HepG2 (cell line): ENCODE measurements at regions of chr3 and their contacts with region 1.

Region 1: GRCh38 chr3:13231781-13232666 is 158.8 kb upstream of the IQSEC1 start:
- DNase-seq: no peak
- ATAC-seq: no peak
- H3K4me3 ChIP-seq: no peak overlapping the region
- H3K27ac ChIP-seq: no peak overlapping the region
- H3K4me1 ChIP-seq: peaks cover 12% of the 10 kb centered on the region; the same call in 1 of the 2 replicates
- H3K27me3 ChIP-seq: no peaks in the 10 kb centered on the region
- CTCF ChIP-seq: no peak
- EP300 ChIP-seq: no peak
- POLR2A ChIP-seq: no peak
- RAD21 ChIP-seq: no peak

Region 2: GRCh38 chr3:13262493-13263211 is 30.6 kb after region 1 on chr3:
- CTCF ChIA-PET with region 1: no interaction called
- POLR2A ChIA-PET with region 1: interaction called, 3 read pairs
- in situ Hi-C with region 1: no loop called
- intact Hi-C with region 1: loop called (anchors 1 kb)
- DNase-seq: peak; percentile 99
- ATAC-seq: peak; percentile 72
- H3K4me3 ChIP-seq: no peak overlapping the region
- H3K27ac ChIP-seq: peak overlapping the region; percentile 93
- H3K4me1 ChIP-seq: peaks cover 92% of the 10 kb centered on the region
- H3K27me3 ChIP-seq: no peaks in the 10 kb centered on the region
- CTCF ChIP-seq: peak; percentile 18; the same call in 1 of the 2 replicates
- EP300 ChIP-seq: peak; percentile 36 to 96; a peak in 3 of 4 replicates
- POLR2A ChIP-seq: no peak
- RAD21 ChIP-seq: peak; percentile 36; the same call in 1 of the 2 replicates